ENCODE measurements at regions of chr3 and their contacts with region 1.

Region 1: DNA sequence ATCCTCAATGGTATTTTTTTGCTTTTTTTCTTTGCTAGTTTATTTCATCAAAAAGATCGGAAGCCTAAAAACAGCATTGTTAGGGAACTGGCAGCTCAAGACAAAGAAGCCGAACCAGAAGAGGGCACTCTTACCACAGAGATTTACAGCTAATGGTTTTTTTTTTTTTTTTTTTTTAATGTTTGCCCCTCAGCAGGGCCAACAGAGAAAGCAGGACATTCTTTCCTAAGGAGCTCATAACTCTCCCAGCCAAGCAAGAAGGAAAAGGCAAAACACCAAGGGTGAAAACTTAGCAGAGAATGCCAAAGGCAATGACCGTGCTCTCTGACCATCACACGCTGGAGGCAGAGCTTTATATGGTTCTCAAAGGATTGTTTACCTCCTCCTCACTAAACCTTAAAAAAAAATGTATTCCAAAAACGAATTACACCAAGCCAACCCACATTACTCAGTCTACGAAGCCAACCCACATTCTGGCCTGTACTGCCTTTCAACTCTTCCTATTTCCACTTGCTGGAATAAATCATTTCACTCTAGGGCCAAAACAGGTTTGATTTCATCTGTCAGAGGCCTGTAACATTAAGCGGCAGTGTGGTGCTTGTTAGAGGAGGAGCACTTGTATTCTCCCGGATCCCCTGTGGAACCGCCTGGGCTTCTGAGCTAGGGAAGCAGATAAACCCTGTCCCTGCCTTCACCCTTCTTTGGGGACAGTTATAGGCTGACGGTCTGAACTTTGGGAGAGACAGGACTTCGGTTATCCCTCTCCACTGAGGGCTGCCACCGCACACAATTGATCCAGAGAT is 35.6 kb upstream of the GYG1 start:
- DNase-seq: peak; percentile 50
- H3K4me3 ChIP-seq: no peak overlapping the region
- H3K27ac ChIP-seq: peak overlapping the region in 1 of 2 experiments; percentile 77; a peak in 2 of 4 replicates
- H3K4me1 ChIP-seq: no peaks in the 10 kb centered on the region
- H3K27me3 ChIP-seq: no peaks in the 10 kb centered on the region
- CTCF ChIP-seq: peak; percentile 77
- EP300 ChIP-seq: no peak
- RAD21 ChIP-seq: peak; percentile 85

Region 2: GRCh38 chr3:148718982-148719862 is 236.5 kb before region 1 on chr3:
- CTCF ChIA-PET with region 1: interaction called, 16 read pairs
- POLR2A ChIA-PET with region 1: no interaction called
- DNase-seq: no peak
- H3K4me3 ChIP-seq: no peak overlapping the region
- H3K27ac ChIP-seq: no peak overlapping the region
- H3K4me1 ChIP-seq: peaks cover 0 to 3% of the 10 kb centered on the region in 2 experiments; a peak in 2 of 4 replicates
- H3K27me3 ChIP-seq: no peaks in the 10 kb centered on the region
- CTCF ChIP-seq: peak; percentile 70
- EP300 ChIP-seq: no peak
- RAD21 ChIP-seq: peak; percentile 80

Region 3: DNA sequence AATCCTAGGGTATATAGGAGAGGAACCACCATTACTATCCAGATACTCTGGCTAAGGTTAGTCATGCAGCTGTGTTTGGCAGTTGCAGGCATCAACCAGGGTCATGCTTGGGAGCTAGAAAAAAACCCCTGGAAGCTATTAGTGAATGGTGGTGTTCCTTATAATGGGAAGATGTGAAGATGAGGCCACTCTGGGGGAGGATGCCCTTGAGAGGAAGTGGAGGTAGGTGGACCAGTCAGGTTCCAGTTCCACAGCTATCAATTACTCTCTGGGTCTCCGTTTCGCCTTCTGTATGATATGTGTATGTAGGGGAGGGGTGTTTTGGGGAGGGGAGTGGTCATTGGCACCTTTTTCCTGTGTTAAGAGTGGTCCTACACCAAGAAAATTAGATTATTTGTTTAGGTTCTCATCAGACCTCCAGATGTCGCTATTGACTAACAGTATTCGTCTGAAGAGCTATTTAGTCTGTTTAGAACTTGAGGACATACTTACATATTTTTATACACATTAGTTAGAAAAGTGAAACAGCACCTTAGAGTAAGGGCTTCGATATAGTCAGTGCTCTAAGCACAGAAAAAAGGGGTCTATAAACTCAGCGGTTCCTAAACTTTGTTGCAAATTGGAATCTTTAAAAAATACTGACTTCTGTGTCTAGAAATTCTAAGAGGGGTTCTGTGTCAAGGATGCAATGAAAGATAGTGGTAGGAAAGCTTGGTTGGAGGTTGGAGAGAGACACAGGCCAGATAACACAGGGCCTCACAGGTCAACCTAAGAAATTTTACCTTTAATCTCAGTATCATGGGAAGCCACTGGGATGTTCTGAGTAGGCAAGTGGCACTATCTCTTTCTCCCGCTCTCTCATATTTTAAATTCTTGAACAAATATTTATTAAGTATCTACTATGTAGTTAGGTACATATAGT is 164.6 kb after region 1 on chr3:
- CTCF ChIA-PET with region 1: interaction called, 75 read pairs
- POLR2A ChIA-PET with region 1: no interaction called
- DNase-seq: peak; percentile 65
- H3K4me3 ChIP-seq: no peak overlapping the region
- H3K27ac ChIP-seq: no peak overlapping the region; a peak in 1 of 4 replicates
- H3K4me1 ChIP-seq: no peaks in the 10 kb centered on the region
- H3K27me3 ChIP-seq: no peaks in the 10 kb centered on the region
- CTCF ChIP-seq: peak; percentile 73
- EP300 ChIP-seq: no peak
- RAD21 ChIP-seq: peak; percentile 93

Region 4: GRCh38 chr3:149273096-149273751 is 317.5 kb after region 1 on chr3:
- CTCF ChIA-PET with region 1: interaction called, 54 read pairs
- POLR2A ChIA-PET with region 1: no interaction called
- DNase-seq: peak; percentile 63
- H3K4me3 ChIP-seq: peak overlapping the region in 1 of 2 experiments; percentile 37; a peak in 1 of 4 replicates
- H3K27ac ChIP-seq: no peak overlapping the region
- H3K4me1 ChIP-seq: 0 out of 4 replicates have a peak, but pooled peaks cover 0 to 12% of the 10 kb centered on the region in 2 experiments
- H3K27me3 ChIP-seq: no peaks in the 10 kb centered on the region
- CTCF ChIP-seq: peak; percentile 98
- EP300 ChIP-seq: peak in 1 of 2 experiments; percentile 16; a peak in 1 of 4 replicates
- RAD21 ChIP-seq: peak; percentile 99

Region 5: DNA sequence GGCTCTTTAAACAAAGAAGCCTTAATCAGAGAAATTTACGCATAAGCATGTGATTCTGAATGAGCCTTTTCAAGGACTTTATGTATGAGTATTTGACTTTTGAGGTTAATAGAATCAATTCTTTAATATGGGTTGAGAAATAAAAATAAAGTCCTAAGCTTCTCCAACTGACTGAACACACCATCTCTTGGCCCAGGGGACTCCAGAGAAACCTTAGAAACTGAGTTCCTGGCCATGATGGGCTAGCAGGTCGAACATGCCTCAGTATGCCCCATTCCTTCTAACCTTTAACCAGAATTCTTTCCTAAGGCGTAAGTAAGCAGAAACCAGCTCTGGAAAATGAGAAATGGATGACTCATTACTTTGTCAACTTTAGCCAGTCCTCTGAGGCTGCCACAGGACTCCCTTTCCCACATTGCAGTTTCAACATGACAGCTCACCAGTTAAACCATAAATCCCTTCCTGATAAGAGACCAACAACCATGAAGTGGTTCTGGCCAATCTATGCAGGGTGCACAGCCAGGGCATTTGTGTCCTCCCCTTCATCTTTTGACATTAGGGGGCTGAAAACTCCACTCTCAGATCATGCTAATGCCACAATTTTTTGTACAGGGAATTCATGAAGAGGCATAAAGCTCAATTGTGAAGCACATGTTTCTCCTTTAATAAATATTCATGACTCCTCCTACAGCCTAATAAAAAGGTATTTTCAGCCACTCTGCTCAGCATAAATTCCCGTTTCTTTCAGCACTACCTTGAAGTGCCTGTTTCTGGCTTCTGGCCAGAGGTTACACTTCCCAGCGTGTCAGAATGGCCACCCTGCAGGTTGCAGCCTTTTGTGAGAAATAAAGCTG is 344.4 kb after region 1 on chr3:
- CTCF ChIA-PET with region 1: no interaction called
- POLR2A ChIA-PET with region 1: no interaction called
- DNase-seq: no peak
- H3K4me3 ChIP-seq: 0 out of 4 replicates have a peak overlapping the region, but pooled peaks of 1 of the 2 experiments have one; percentile 3
- H3K27ac ChIP-seq: peak overlapping the region; percentile 61 to 89; a peak in 3 of 4 replicates
- H3K4me1 ChIP-seq: peaks cover 0 to 17% of the 10 kb centered on the region in 2 experiments; a peak in 2 of 4 replicates
- H3K27me3 ChIP-seq: no peaks in the 10 kb centered on the region
- CTCF ChIP-seq: no peak
- EP300 ChIP-seq: peak in 1 of 2 experiments; percentile 82; a peak in 2 of 4 replicates
- RAD21 ChIP-seq: no peak

Region 6: GRCh38 chr3:149480325-149481017 is 524.7 kb after region 1 on chr3:
- CTCF ChIA-PET with region 1: interaction called, 12 read pairs
- POLR2A ChIA-PET with region 1: no interaction called
- DNase-seq: peak; percentile 77
- H3K4me3 ChIP-seq: no peak overlapping the region
- H3K27ac ChIP-seq: peak overlapping the region in 1 of 2 experiments; percentile 23; a peak in 1 of 4 replicates
- H3K4me1 ChIP-seq: peaks cover 0 to 10% of the 10 kb centered on the region in 2 experiments; a peak in 1 of 4 replicates
- H3K27me3 ChIP-seq: no peaks in the 10 kb centered on the region
- CTCF ChIP-seq: peak; percentile 93
- EP300 ChIP-seq: no peak
- RAD21 ChIP-seq: peak; percentile 97